Panc1 (cell line): ENCODE measurements at regions of chr9 and their contacts with region 1.

Region 1: GRCh38 chr9:37364751-37365360 is 57.6 kb upstream of the GRHPR start:
- DNase-seq: no peak
- ATAC-seq: peak; percentile 65
- H3K4me3 ChIP-seq: no peak overlapping the region
- H3K27ac ChIP-seq: no peak overlapping the region
- H3K4me1 ChIP-seq: no peaks in the 10 kb centered on the region
- H3K27me3 ChIP-seq: no peaks in the 10 kb centered on the region
- CTCF ChIP-seq: no peak

Region 2: DNA sequence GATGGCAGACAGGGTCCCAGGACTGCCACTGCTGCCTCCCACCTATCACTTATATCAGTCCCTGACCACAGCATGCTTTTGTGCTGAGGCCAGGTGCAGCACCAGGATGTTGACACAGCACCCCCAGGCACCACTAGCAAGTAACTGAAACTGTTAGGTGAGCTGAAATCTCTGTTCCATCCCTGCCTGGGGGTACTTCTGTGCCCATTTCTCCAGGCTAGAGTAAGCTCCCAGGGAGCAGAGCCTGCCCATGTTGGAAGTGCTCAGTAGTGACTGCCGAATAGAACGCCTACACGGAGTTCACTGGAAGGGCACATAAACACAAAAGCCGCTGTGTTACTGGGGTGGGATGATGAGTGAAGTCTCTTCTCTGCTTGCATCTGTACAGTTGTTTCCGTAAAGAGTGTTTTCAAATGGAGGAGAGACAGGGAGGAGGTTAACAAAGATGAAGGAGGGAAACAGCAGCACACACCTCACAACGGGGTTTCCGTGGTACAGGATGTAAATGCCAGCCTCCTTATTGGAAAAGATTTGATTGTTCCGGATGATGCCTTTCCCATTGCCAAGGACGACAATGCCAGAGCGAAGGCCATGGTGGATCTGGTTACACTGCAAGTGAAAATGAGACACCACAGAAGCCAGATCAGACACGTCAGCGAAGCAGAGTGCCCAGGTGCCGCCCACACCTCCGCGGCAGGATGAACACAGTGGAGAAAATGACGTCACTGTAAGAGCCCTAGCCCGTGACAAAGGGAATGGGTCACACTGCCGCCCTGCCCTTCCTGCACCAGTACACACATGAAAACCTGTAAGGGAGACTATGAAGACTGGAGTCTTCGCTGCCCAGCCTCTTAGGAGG is 164.0 kb after region 1 on chr9:
- CTCF ChIA-PET with region 1: no interaction called
- POLR2A ChIA-PET with region 1: no interaction called
- in situ Hi-C with region 1: no loop called
- intact Hi-C with region 1: no loop called
- DNase-seq: no peak
- ATAC-seq: no peak
- H3K4me3 ChIP-seq: no peak overlapping the region
- H3K27ac ChIP-seq: no peak overlapping the region
- H3K4me1 ChIP-seq: no peaks in the 10 kb centered on the region
- H3K27me3 ChIP-seq: no peaks in the 10 kb centered on the region
- CTCF ChIP-seq: no peak

Region 3: GRCh38 chr9:38074441-38074961 is 709.6 kb after region 1 on chr9:
- CTCF ChIA-PET with region 1: no interaction called
- POLR2A ChIA-PET with region 1: interaction called, 13 read pairs
- in situ Hi-C with region 1: no loop called
- intact Hi-C with region 1: no loop called
- DNase-seq: no peak
- ATAC-seq: no peak
- H3K4me3 ChIP-seq: no peak overlapping the region
- H3K27ac ChIP-seq: no peak overlapping the region
- H3K4me1 ChIP-seq: peaks cover 5% of the 10 kb centered on the region
- H3K27me3 ChIP-seq: no peaks in the 10 kb centered on the region
- CTCF ChIP-seq: no peak